ENCODE measurements at regions of chr7 and their contacts with region 1.

Region 1: GRCh38 chr7:76359111-76359978 is 554 bp upstream of the YWHAG start:
- DNase-seq: peak; percentile 99
- H3K4me3 Mint-ChIP-seq: peak overlapping the region; percentile 91
- H3K27ac Mint-ChIP-seq: peak overlapping the region; percentile 94
- H3K4me1 Mint-ChIP-seq: peaks cover 42% of the 10 kb centered on the region
- H3K27me3 Mint-ChIP-seq: no peaks in the 10 kb centered on the region

Region 2: GRCh38 chr7:76011442-76011861 is 347.9 kb before region 1 on chr7:
- CTCF ChIA-PET with region 1: no interaction called
- intact Hi-C with region 1: loop called (anchors 5 kb)
- DNase-seq: no peak
- H3K4me3 Mint-ChIP-seq: no peak overlapping the region
- H3K27ac Mint-ChIP-seq: no peak overlapping the region
- H3K4me1 Mint-ChIP-seq: peaks cover 25% of the 10 kb centered on the region
- H3K27me3 Mint-ChIP-seq: peaks cover 2% of the 10 kb centered on the region

Region 3: GRCh38 chr7:76166404-76167255 is 192.7 kb before region 1 on chr7:
- CTCF ChIA-PET with region 1: interaction called, 5 read pairs
- intact Hi-C with region 1: loop called (anchors 5 kb)
- DNase-seq: peak; percentile 94
- H3K4me3 Mint-ChIP-seq: peak overlapping the region; percentile 84
- H3K27ac Mint-ChIP-seq: peak overlapping the region; percentile 85
- H3K4me1 Mint-ChIP-seq: peaks cover 8% of the 10 kb centered on the region
- H3K27me3 Mint-ChIP-seq: no peaks in the 10 kb centered on the region

Region 4: GRCh38 chr7:76291343-76292212 is 67.8 kb before region 1 on chr7:
- CTCF ChIA-PET with region 1: interaction called, 9 read pairs
- intact Hi-C with region 1: loop called (anchors 1 kb)
- DNase-seq: peak; percentile 97
- H3K4me3 Mint-ChIP-seq: peak overlapping the region; percentile 38
- H3K27ac Mint-ChIP-seq: peak overlapping the region; percentile 68
- H3K4me1 Mint-ChIP-seq: peaks cover 9% of the 10 kb centered on the region
- H3K27me3 Mint-ChIP-seq: no peaks in the 10 kb centered on the region

Region 5: GRCh38 chr7:76393116-76394031 is 34.0 kb after region 1 on chr7:
- CTCF ChIA-PET with region 1: interaction called, 5 read pairs
- intact Hi-C with region 1: loop called (anchors 1 kb)
- DNase-seq: peak; percentile 89
- H3K4me3 Mint-ChIP-seq: peak overlapping the region; percentile 85
- H3K27ac Mint-ChIP-seq: peak overlapping the region; percentile 92
- H3K4me1 Mint-ChIP-seq: peaks cover 23% of the 10 kb centered on the region
- H3K27me3 Mint-ChIP-seq: no peaks in the 10 kb centered on the region